Ascending aorta (tissue), 2 donors: ENCODE measurements at regions of chr6 and their contacts with region 1.

Region 1: GRCh38 chr6:85354761-85355618 is 94.9 kb upstream of the NT5E start:
- DNase-seq: peak; percentile 13 to 87
- H3K4me3 ChIP-seq: no peak overlapping the region
- H3K27ac ChIP-seq: no peak overlapping the region
- H3K4me1 ChIP-seq: no peaks in the 10 kb centered on the region
- H3K27me3 ChIP-seq: no peaks in the 10 kb centered on the region
- CTCF ChIP-seq: peak; percentile 73 to 97 (median 96)

Region 2: GRCh38 chr6:85192596-85192995 is 162.4 kb before region 1 on chr6:
- intact Hi-C with region 1: no loop called
- DNase-seq: no peak
- H3K4me3 ChIP-seq: no peak overlapping the region
- H3K27ac ChIP-seq: no peak overlapping the region
- H3K4me1 ChIP-seq: no peaks in the 10 kb centered on the region
- H3K27me3 ChIP-seq: no peaks in the 10 kb centered on the region
- CTCF ChIP-seq: no peak

Region 3: GRCh38 chr6:85323435-85324040 is 31.5 kb before region 1 on chr6:
- intact Hi-C with region 1: no loop called
- DNase-seq: peak in 1 of 2 donors; percentile 84
- H3K4me3 ChIP-seq: no peak overlapping the region
- H3K27ac ChIP-seq: no peak overlapping the region
- H3K4me1 ChIP-seq: no peaks in the 10 kb centered on the region
- H3K27me3 ChIP-seq: no peaks in the 10 kb centered on the region
- CTCF ChIP-seq: peak; percentile 46 to 74 (median 67)

Region 4: GRCh38 chr6:85537055-85537494 is 182.1 kb after region 1 on chr6:
- intact Hi-C with region 1: loop called (anchors 1 kb)
- DNase-seq: no peak
- H3K4me3 ChIP-seq: no peak overlapping the region
- H3K27ac ChIP-seq: peak overlapping the region in 1 of 2 donors; percentile 56
- H3K4me1 ChIP-seq: peaks cover 0 to 10% of the 10 kb centered on the region in 2 donors
- H3K27me3 ChIP-seq: no peaks in the 10 kb centered on the region
- CTCF ChIP-seq: peak; percentile 17 to 60 (median 58)